Vagina (tissue), 2 donors: ENCODE measurements at regions of chr2 and their contacts with region 1.

Region 1: DNA sequence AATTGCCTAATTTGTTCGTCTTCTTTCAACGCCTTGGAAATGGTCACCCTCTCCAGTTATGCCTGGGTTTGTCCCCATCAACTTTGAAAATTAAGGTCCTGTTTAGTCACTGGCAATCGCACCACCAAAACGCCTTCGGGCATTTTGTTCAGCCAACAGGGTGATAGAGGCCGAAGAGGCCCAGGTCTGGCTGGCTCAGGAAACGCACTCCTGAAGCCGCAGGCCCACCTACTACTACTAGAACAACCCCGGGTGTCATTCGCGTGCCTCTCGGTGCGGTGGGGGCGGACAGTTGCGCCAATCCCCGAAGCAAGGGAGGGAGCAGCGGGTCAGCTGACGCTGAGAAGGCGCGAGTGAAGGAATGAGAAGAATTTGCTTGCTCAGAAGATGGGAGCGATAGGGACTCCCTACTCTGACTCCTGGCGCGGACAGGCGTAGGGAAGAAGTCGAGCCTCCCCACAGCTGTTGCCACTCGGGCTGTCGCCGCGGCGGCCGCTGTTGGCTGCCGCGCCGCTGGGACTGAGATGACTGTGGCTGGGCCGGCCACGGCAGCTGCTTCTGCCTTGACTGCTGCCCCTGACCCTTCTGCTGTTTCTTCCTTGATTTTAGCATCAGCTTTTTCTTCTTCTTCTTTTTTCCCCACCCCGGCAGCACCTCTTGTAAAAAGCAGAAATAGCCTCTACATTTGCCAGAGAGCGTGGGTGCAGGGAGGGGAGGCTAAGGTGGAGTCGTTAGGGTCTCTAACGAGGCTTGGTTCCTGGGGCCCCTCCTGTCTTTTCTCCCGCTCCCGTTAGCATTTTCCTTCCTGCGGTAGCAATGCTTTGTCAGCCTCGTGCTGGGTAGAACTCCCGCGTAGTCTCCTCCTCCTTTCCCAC is 387.6 kb downstream of the FIGN start:
- DNase-seq: peak in 1 of 2 donors; percentile 89
- H3K4me3 ChIP-seq: peak overlapping the region; percentile 40 to 43
- H3K27ac ChIP-seq: peak overlapping the region; percentile 78
- H3K4me1 ChIP-seq: peaks cover 12% of the 10 kb centered on the region
- H3K27me3 ChIP-seq: no peaks in the 10 kb centered on the region
- CTCF ChIP-seq: no peak
- POLR2A ChIP-seq: no peak

Region 2: GRCh38 chr2:162073888-162074645 is 1274.2 kb before region 1 on chr2 and contains the start of gene DPP4:
- intact Hi-C with region 1: no loop called
- DNase-seq: no peak
- H3K4me3 ChIP-seq: peak within 1 kb of the TSS; percentile 56 to 64
- H3K27ac ChIP-seq: peak within 1 kb of the TSS; percentile 61
- H3K4me1 ChIP-seq: peaks cover 4% of the 10 kb centered on the region
- H3K27me3 ChIP-seq: no peaks in the 10 kb centered on the region
- CTCF ChIP-seq: no peak
- POLR2A ChIP-seq: no peak
- total RNA-seq, gene DPP4: 15.5 TPM

Region 3: GRCh38 chr2:163735685-163736432 is 387.6 kb after region 1 on chr2 and contains the start of gene FIGN:
- intact Hi-C with region 1: loop called (anchors 2 kb)
- DNase-seq: peak in 1 of 2 donors; percentile 91
- H3K4me3 ChIP-seq: peak within 1 kb of the TSS; percentile 61 to 77
- H3K27ac ChIP-seq: peak within 1 kb of the TSS; percentile 93
- H3K4me1 ChIP-seq: peaks cover 6% of the 10 kb centered on the region
- H3K27me3 ChIP-seq: no peaks in the 10 kb centered on the region
- CTCF ChIP-seq: no peak
- POLR2A ChIP-seq: peak in 1 of 2 donors; percentile 57
- total RNA-seq, gene FIGN: 3.2 TPM